HepG2 (cell line): ENCODE measurements at regions of chr1 and their contacts with region 1.

Region 1: GRCh38 chr1:115469703-115470476 is 131.8 kb upstream of the NGF start:
- DNase-seq: peak; percentile 8
- ATAC-seq: peak; percentile 92
- H3K4me3 ChIP-seq: no peak overlapping the region
- H3K27ac ChIP-seq: no peak overlapping the region
- H3K4me1 ChIP-seq: no peaks in the 10 kb centered on the region
- H3K27me3 ChIP-seq: no peaks in the 10 kb centered on the region
- CTCF ChIP-seq: peak; percentile 91
- EP300 ChIP-seq: no peak
- POLR2A ChIP-seq: no peak
- RAD21 ChIP-seq: peak; percentile 68

Region 2: GRCh38 chr1:115138968-115139367 is 330.9 kb before region 1 on chr1:
- CTCF ChIA-PET with region 1: interaction called, 21 read pairs
- POLR2A ChIA-PET with region 1: no interaction called
- in situ Hi-C with region 1: loop called (anchors 5 kb)
- intact Hi-C with region 1: no loop called
- DNase-seq: peak; percentile 63
- ATAC-seq: peak; percentile 100
- H3K4me3 ChIP-seq: no peak overlapping the region
- H3K27ac ChIP-seq: no peak overlapping the region
- H3K4me1 ChIP-seq: no peaks in the 10 kb centered on the region
- H3K27me3 ChIP-seq: no peaks in the 10 kb centered on the region
- CTCF ChIP-seq: peak; percentile 95
- EP300 ChIP-seq: no peak
- POLR2A ChIP-seq: no peak
- RAD21 ChIP-seq: peak; percentile 88

Region 3: DNA sequence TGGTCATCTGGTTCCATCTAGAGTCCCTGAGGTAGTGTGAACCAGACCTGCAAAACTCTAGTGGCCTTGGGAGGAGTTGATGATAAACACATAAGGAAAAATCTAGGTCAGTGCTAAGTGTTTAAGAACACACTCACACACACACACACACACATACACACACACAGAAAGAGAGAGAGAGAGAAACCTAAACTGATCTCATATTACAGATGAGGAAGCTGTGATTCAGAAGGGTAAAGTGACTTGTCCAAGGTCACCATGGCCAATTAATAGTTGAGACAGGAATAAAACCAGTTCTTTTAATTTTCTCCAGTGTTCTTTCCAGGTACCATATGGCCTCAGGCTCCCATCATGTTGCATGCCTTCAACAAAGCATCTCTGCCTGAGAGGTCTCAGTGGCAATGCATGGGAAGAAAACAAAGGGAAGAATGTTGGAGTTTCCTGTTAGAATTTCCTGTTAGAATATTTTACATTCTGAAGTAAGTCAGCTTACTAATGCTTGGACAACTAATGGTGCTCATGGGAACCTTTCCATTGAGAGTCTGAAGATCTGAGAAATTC is 303.3 kb before region 1 on chr1:
- CTCF ChIA-PET with region 1: no interaction called
- POLR2A ChIA-PET with region 1: no interaction called
- in situ Hi-C with region 1: no loop called
- intact Hi-C with region 1: no loop called
- DNase-seq: no peak
- ATAC-seq: no peak
- H3K4me3 ChIP-seq: no peak overlapping the region
- H3K27ac ChIP-seq: no peak overlapping the region
- H3K4me1 ChIP-seq: no peaks in the 10 kb centered on the region
- H3K27me3 ChIP-seq: no peaks in the 10 kb centered on the region
- CTCF ChIP-seq: no peak
- EP300 ChIP-seq: no peak
- POLR2A ChIP-seq: no peak
- RAD21 ChIP-seq: no peak

Region 4: GRCh38 chr1:115275212-115275611 is 194.7 kb before region 1 on chr1:
- CTCF ChIA-PET with region 1: interaction called, 3 read pairs
- POLR2A ChIA-PET with region 1: no interaction called
- in situ Hi-C with region 1: no loop called
- intact Hi-C with region 1: loop called (anchors 1 kb)
- DNase-seq: no peak
- ATAC-seq: no peak
- H3K4me3 ChIP-seq: no peak overlapping the region
- H3K27ac ChIP-seq: no peak overlapping the region
- H3K4me1 ChIP-seq: no peaks in the 10 kb centered on the region
- H3K27me3 ChIP-seq: no peaks in the 10 kb centered on the region
- CTCF ChIP-seq: no peak
- EP300 ChIP-seq: no peak
- POLR2A ChIP-seq: no peak
- RAD21 ChIP-seq: no peak

Region 5: DNA sequence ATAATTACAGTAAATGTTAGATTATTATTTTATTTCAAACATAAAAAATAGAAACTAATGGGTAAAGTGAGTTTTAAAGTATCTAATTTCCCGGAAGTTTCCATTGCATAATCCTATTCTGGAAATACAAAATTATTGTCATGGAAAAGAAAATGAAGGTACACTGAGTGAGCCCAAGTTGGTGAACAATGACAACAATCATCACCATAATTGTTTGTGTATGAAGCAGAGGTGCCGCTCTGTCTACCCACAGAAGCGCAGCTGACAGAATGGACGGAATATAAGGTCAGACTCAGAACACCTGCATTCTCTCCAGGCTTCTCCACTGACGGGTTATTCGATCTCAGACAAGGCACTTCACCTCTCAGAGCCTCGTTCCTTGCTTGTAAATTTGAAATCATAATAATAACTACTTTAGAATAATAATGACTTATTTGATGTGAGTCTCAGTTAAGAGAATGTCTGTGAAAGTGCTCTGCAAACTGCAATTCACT is 32.7 kb before region 1 on chr1:
- CTCF ChIA-PET with region 1: no interaction called
- POLR2A ChIA-PET with region 1: no interaction called
- in situ Hi-C with region 1: no loop called
- intact Hi-C with region 1: no loop called
- DNase-seq: no peak
- ATAC-seq: no peak
- H3K4me3 ChIP-seq: no peak overlapping the region
- H3K27ac ChIP-seq: no peak overlapping the region
- H3K4me1 ChIP-seq: no peaks in the 10 kb centered on the region
- H3K27me3 ChIP-seq: peaks cover 0 to 1% of the 10 kb centered on the region in 2 experiments; a peak in 1 of 5 replicates
- CTCF ChIP-seq: no peak
- EP300 ChIP-seq: no peak
- POLR2A ChIP-seq: no peak
- RAD21 ChIP-seq: no peak